Naive thymus-derived CD8-positive, alpha-beta T cell (primary cell): ENCODE measurements at regions of chr14 and their contacts with region 1.

Region 1: DNA sequence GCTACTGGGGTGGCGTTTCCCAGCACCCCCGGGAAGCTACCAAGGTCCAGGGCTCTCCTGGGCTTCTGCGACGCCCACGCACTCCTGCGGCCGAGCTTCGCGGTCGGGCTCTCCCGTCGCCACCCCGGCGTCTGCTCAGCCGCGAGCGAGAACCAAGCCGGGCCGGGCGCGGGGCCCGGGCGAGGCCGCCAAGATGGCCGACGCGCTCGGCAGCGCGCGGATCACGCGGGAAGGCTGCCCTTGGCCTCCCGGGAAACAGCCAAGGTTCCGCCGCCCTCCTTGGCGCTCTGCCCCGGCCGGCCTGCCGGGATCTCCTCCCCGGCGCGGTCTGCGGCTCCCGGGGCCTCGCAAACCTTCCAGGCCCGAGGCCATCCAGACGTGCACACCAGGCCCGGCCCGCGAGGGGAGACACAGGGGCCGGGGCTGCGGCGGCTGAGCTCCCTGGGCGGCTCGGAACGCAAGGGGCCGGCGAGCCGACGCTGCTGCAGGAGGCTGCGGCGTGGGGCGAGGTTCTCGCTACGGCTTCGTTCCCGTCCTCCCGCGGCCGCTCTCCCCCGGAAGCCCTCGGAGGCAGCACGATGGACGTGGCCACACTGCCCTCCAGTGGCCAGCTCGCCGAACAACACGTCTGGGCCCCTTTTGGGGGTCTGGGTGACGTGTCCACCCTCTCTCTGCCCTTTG is 23.5 kb upstream of the ZFP36L1 start:
- DNase-seq: peak; percentile 80 to 94 (median 90)
- ATAC-seq: peak; percentile 79 to 81
- H3K4me3 Mint-ChIP-seq: peak overlapping the region; percentile 77 to 96 (median 87)
- H3K27ac Mint-ChIP-seq: peak overlapping the region; percentile 92 to 100 (median 97)
- H3K4me1 Mint-ChIP-seq: peaks cover 34 to 84% (median 69%) of the 10 kb centered on the region in 4 donors
- H3K27me3 Mint-ChIP-seq: no peaks in the 10 kb centered on the region

Region 2: GRCh38 chr14:67943947-67944346 is 872.5 kb before region 1 on chr14:
- POLR2A ChIA-PET with region 1: interaction called, 18 read pairs
- DNase-seq: peak in 8 of 10 donors; percentile 37 to 73 (median 52)
- ATAC-seq: peak in 1 of 2 donors; percentile 60
- H3K4me3 Mint-ChIP-seq: no peak overlapping the region
- H3K27ac Mint-ChIP-seq: no peak overlapping the region
- H3K4me1 Mint-ChIP-seq: peaks cover 0 to 2% (median 0%) of the 10 kb centered on the region in 4 donors
- H3K27me3 Mint-ChIP-seq: no peaks in the 10 kb centered on the region

Region 3: GRCh38 chr14:68248481-68249255 is 567.7 kb before region 1 on chr14:
- POLR2A ChIA-PET with region 1: interaction called, 118 read pairs
- DNase-seq: peak in 6 of 10 donors; percentile 23 to 66 (median 46)
- ATAC-seq: peak; percentile 79 to 82
- H3K4me3 Mint-ChIP-seq: peak overlapping the region in 1 of 10 donors; percentile 49
- H3K27ac Mint-ChIP-seq: peak overlapping the region in 7 of 10 donors; percentile 9 to 68 (median 37)
- H3K4me1 Mint-ChIP-seq: peaks cover 12 to 54% (median 34%) of the 10 kb centered on the region in 4 donors
- H3K27me3 Mint-ChIP-seq: no peaks in the 10 kb centered on the region

Region 4: DNA sequence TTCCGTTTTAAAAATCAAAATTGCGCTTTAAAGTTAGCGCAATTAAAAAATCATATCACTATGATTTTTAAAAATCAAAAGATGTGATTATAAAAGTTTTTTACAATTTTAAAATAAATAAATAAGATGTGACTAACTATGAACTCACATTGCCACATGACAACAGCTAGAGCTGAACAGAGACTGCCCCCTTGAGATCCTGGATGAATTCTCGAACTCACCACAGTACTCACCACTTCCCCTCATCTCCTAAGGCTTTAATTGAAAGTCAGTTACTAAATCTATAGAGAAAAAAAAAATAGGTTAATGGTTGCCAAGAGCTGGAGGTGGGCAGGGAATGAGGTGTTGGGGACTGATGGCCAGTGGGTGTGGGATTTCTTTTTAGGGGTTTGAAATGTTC is 407.7 kb before region 1 on chr14:
- POLR2A ChIA-PET with region 1: interaction called, 13 read pairs
- DNase-seq: peak in 4 of 10 donors; percentile 2 to 37 (median 23)
- ATAC-seq: peak; percentile 63 to 71
- H3K4me3 Mint-ChIP-seq: peak overlapping the region in 2 of 10 donors; percentile 0 to 3
- H3K27ac Mint-ChIP-seq: peak overlapping the region in 7 of 10 donors; percentile 24 to 88 (median 57)
- H3K4me1 Mint-ChIP-seq: peaks cover 30 to 63% (median 39%) of the 10 kb centered on the region in 4 donors
- H3K27me3 Mint-ChIP-seq: no peaks in the 10 kb centered on the region

Region 5: GRCh38 chr14:68685419-68686204 is 130.8 kb before region 1 on chr14:
- POLR2A ChIA-PET with region 1: interaction called, 13 read pairs
- DNase-seq: peak; percentile 39 to 93 (median 80)
- ATAC-seq: peak; percentile 86 to 88
- H3K4me3 Mint-ChIP-seq: peak overlapping the region in 9 of 10 donors; percentile 32 to 77 (median 72)
- H3K27ac Mint-ChIP-seq: peak overlapping the region; percentile 93 to 98 (median 96)
- H3K4me1 Mint-ChIP-seq: peaks cover 36 to 82% (median 70%) of the 10 kb centered on the region in 4 donors
- H3K27me3 Mint-ChIP-seq: no peaks in the 10 kb centered on the region

Region 6: DNA sequence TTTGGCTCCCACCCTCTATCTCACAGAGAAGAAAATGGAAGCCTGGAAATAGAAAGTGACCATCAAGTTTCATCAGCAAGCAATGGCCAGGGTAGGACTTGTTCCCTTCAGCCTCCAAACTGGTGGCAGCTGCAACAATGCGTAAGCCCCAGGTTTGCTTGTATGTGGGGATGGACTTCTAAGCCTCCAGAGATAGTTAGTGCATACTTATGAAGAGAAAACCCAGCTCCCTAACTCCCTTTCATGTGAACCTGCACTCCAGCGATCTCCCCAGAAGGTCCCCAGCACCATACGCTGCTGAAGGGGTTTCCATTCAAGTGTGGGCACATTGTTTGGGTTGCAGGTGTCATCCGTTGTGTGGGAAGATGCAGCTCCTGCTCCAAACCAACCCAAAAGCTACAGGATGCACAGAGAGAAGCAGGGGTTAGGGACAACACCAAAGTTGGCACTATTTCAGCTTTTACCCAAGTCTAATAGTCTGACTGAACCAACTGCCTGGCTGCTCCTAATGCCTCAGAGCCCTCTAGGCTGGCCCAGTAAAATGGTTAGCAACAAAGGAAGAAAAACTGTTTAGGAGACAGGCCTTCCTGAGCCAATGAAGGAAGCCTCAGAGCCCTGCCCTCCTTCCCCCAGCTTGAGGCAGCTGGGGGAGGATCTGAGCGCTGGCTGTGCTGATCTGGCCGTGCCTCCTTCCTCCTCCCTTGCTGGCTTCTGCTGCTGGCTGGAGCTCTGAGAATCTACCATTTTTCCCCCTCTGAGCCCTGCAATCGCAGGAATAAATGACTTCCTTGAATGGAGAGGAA is 35.8 kb before region 1 on chr14:
- POLR2A ChIA-PET with region 1: interaction called, 1,375 read pairs
- DNase-seq: peak in 4 of 10 donors; percentile 31 to 47 (median 34)
- ATAC-seq: peak; percentile 16 to 17
- H3K4me3 Mint-ChIP-seq: peak overlapping the region; percentile 75 to 89 (median 84)
- H3K27ac Mint-ChIP-seq: peak overlapping the region; percentile 85 to 99 (median 93)
- H3K4me1 Mint-ChIP-seq: peaks cover 39 to 87% (median 80%) of the 10 kb centered on the region in 4 donors
- H3K27me3 Mint-ChIP-seq: no peaks in the 10 kb centered on the region

Region 7: GRCh38 chr14:68854421-68854820 is 38.0 kb after region 1 on chr14:
- POLR2A ChIA-PET with region 1: no interaction called
- DNase-seq: no peak
- ATAC-seq: no peak
- H3K4me3 Mint-ChIP-seq: no peak overlapping the region
- H3K27ac Mint-ChIP-seq: no peak overlapping the region
- H3K4me1 Mint-ChIP-seq: peaks cover 0 to 9% (median 0%) of the 10 kb centered on the region in 4 donors
- H3K27me3 Mint-ChIP-seq: no peaks in the 10 kb centered on the region

Region 8: DNA sequence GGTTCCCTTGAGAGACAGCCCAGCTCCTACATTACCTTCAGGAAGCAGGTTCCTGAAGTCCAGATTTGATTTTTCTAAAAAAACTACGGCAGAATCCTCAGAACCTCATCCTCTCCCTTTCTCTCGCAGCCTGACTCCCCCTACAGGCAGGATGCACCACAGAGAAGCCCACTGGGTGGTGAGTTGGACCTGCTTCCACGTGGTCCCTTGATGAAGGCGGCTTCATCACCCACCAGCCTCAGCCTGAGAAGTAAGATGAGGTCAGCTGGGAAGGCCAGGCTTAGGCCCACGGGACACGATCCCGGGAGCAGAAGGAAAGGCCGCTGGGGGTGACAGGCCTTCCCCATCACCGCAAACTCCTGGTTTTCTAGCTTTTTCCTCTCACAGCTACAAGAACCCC is 79.7 kb after region 1 on chr14:
- POLR2A ChIA-PET with region 1: no interaction called
- DNase-seq: peak in 1 of 10 donors; percentile 27
- ATAC-seq: no peak
- H3K4me3 Mint-ChIP-seq: no peak overlapping the region
- H3K27ac Mint-ChIP-seq: peak overlapping the region in 7 of 10 donors; percentile 3 to 70 (median 22)
- H3K4me1 Mint-ChIP-seq: peaks cover 20 to 40% (median 24%) of the 10 kb centered on the region in 4 donors
- H3K27me3 Mint-ChIP-seq: no peaks in the 10 kb centered on the region